HEK293T (cell line): ENCODE measurements at regions of chr19 and their contacts with region 1.

Region 1: DNA sequence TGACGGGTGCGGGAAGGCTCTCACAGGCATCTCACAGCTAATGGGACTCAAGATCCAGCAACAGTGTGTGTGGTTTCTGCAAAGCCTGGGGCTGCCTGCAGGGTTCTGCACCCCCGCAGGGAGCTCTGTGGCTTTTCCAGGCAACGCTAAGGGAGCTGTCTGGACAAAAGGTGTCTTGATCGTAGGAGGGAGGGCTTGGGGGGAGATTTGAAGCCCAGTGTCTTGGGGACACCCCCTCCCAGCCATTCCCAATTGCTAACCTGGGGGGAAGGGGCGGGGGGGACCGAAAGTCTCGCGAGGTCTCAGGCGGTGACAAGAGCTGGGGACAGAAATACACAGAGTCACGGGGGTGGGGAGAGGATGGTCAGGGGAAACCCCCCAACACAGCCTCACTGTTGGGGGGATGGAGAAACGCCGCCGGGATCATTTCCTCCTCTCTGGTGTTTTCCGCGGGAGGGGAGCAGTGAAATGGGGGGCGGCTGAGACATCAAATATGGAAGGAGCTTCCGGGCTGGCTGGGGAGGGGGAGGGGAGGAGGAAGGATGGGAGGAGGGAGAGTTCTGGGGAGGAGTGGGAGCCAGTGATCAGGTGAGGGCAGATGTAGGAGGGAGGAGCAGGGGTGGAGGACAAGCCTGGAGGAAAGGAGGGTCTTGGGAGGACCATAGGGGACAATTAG is 13.3 kb downstream of the KCNC3 start:
- DNase-seq: peak; percentile 56

Region 2: GRCh38 chr19:50266896-50267295 is 49.0 kb before region 1 on chr19:
- CTCF ChIA-PET with region 1: no interaction called
- POLR2A ChIA-PET with region 1: no interaction called
- DNase-seq: peak; percentile 56

Region 3: DNA sequence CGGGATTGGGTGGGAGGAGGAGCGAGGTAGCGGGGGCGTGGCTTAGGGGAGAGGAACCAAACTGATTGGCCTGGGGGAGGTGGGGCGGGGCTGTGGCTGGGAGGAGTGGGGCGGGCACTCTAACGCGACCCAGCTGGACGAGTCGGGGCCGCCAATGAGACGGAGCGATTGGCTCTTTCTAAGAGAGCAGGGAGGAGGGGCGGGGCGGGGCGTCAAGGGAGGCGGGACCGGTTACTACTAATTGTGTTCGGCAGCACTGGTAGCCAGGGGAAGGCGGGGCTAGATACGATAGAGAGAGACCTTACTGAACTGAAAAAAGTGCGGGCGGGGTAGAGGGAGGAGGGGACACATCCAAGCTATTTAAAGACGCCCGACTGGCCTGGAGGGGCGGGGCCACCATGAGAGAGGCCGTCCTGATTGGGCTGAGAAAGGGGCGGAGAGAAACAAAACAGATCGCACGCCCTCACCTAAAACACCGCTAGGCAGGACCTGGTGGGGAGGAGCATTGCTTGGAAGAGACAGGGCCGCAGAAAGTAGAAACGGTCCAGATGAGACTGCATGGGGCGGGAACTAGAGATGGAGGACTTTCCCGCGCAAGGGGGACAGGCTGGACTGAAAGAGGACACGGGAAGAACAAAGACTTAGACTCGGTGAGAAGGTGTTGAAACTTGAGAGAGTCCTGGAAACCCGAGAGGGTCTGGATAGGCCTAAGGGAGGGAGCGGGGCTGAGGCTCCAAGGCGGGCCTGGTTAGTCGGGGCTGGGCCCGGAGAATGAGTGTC is 13.4 kb after region 1 on chr19 and contains the start of gene KCNC3:
- CTCF ChIA-PET with region 1: interaction called, 5 read pairs
- POLR2A ChIA-PET with region 1: interaction called, 12 read pairs
- DNase-seq: peak; percentile 96

Region 4: DNA sequence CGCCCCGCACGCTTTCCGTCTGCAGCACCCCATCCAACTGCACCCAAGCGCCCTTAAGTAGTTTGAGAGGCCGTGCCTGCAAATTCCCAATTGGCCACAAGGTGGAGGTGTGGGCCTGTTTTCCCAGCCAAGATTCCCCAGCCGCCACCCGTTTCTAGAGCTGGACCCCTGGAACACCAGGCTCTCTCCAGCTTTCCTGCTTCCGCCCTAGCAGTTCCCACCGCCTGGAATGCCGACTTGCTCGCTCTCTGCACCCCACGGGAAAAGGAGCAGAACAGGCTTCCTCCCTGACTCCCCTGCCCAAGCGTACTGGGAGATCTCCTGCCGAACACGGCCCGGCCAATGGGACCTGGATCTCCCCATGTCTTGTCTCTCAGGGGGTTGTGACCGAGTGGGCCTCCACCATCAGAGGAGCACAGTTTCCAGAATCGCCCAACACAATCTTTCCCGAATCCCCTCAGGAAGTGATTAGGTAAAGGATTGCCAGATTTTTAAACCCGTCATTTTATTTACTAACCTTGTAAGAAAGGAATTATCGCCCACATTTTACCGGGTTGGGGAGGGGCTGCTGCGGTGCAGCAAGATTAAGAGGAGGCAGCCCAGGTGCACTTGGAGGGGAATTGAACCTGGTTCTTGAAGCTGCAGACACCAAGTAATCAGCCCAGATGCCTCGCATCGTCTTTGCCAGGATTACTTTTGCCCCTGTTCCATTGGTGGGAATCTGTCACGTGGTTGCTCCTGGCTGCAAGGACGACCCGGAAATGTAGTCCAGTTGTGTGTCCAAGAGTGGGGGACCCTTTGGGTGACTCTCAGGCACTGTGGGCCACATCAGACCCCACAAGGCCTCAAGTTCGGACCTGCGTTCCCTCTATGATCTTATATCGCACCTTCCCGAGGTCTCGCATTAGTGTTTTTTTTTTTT is 53.0 kb after region 1 on chr19:
- CTCF ChIA-PET with region 1: no interaction called
- POLR2A ChIA-PET with region 1: no interaction called
- DNase-seq: peak; percentile 88